ENCODE measurements at regions of chr7 and their contacts with region 1.

Region 1: GRCh38 chr7:151110941-151111645 is 24.8 kb downstream of the AGAP3 start:
- DNase-seq: peak; percentile 83
- H3K4me3 Mint-ChIP-seq: no peak overlapping the region
- H3K27ac Mint-ChIP-seq: no peak overlapping the region
- H3K4me1 Mint-ChIP-seq: no peaks in the 10 kb centered on the region
- H3K27me3 Mint-ChIP-seq: peaks cover 11% of the 10 kb centered on the region

Region 2: GRCh38 chr7:150514748-150515222 is 596.3 kb before region 1 on chr7 and contains the start of gene GIMAP7:
- CTCF ChIA-PET with region 1: no interaction called
- intact Hi-C with region 1: no loop called
- DNase-seq: peak; percentile 70
- H3K4me3 Mint-ChIP-seq: peak within 1 kb of the TSS; percentile 96
- H3K27ac Mint-ChIP-seq: peak within 1 kb of the TSS; percentile 98
- H3K4me1 Mint-ChIP-seq: peaks cover 49% of the 10 kb centered on the region
- H3K27me3 Mint-ChIP-seq: no peaks in the 10 kb centered on the region
- total RNA-seq, gene GIMAP7: 41.6 TPM

Region 3: GRCh38 chr7:150734254-150734653 is 376.8 kb before region 1 on chr7:
- CTCF ChIA-PET with region 1: no interaction called
- intact Hi-C with region 1: no loop called
- DNase-seq: peak; percentile 73
- H3K4me3 Mint-ChIP-seq: no peak overlapping the region
- H3K27ac Mint-ChIP-seq: peak overlapping the region; percentile 95
- H3K4me1 Mint-ChIP-seq: peaks cover 70% of the 10 kb centered on the region
- H3K27me3 Mint-ChIP-seq: no peaks in the 10 kb centered on the region

Region 4: DNA sequence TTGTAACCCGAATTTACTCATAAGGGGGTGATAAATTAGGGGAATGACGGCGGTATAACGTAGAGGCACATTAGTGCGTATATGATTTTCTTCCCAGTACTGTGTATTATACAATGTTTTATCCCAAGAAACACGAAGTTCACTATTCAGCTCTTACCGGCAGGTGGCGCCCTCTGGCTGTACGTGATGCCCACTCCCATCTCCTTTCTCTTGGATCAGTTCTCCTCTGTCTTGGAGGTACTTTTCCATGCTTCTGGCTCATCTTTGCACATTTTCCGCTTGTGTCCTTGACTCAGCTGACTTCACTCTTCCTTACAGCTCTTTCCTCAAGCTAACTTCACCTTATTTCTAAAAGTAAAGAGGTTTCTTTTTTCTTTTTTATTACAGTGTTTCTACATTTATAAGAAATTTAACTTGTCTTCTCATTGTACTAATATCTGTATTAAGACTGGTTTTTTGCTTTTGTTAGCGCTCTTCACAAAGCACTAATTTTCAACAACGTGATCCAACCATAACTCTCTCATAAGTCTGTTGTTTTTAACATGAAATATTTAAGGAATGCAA is 332.3 kb before region 1 on chr7:
- CTCF ChIA-PET with region 1: interaction called, 3 read pairs
- intact Hi-C with region 1: loop called (anchors 5 kb)
- DNase-seq: peak; percentile 87
- H3K4me3 Mint-ChIP-seq: no peak overlapping the region
- H3K27ac Mint-ChIP-seq: no peak overlapping the region
- H3K4me1 Mint-ChIP-seq: peaks cover 4% of the 10 kb centered on the region
- H3K27me3 Mint-ChIP-seq: peaks cover 3% of the 10 kb centered on the region

Region 5: GRCh38 chr7:150962553-150963399 is 148.3 kb before region 1 on chr7:
- CTCF ChIA-PET with region 1: interaction called, 11 read pairs
- intact Hi-C with region 1: loop called (anchors 1 kb)
- DNase-seq: peak; percentile 68
- H3K4me3 Mint-ChIP-seq: no peak overlapping the region
- H3K27ac Mint-ChIP-seq: no peak overlapping the region
- H3K4me1 Mint-ChIP-seq: peaks cover 14% of the 10 kb centered on the region
- H3K27me3 Mint-ChIP-seq: peaks cover 16% of the 10 kb centered on the region

Region 6: GRCh38 chr7:151008511-151009323 is 102.4 kb before region 1 on chr7:
- CTCF ChIA-PET with region 1: interaction called, 7 read pairs
- intact Hi-C with region 1: loop called (anchors 1 kb)
- DNase-seq: peak; percentile 70
- H3K4me3 Mint-ChIP-seq: peak overlapping the region; percentile 70
- H3K27ac Mint-ChIP-seq: peak overlapping the region; percentile 71
- H3K4me1 Mint-ChIP-seq: peaks cover 52% of the 10 kb centered on the region
- H3K27me3 Mint-ChIP-seq: no peaks in the 10 kb centered on the region

Region 7: DNA sequence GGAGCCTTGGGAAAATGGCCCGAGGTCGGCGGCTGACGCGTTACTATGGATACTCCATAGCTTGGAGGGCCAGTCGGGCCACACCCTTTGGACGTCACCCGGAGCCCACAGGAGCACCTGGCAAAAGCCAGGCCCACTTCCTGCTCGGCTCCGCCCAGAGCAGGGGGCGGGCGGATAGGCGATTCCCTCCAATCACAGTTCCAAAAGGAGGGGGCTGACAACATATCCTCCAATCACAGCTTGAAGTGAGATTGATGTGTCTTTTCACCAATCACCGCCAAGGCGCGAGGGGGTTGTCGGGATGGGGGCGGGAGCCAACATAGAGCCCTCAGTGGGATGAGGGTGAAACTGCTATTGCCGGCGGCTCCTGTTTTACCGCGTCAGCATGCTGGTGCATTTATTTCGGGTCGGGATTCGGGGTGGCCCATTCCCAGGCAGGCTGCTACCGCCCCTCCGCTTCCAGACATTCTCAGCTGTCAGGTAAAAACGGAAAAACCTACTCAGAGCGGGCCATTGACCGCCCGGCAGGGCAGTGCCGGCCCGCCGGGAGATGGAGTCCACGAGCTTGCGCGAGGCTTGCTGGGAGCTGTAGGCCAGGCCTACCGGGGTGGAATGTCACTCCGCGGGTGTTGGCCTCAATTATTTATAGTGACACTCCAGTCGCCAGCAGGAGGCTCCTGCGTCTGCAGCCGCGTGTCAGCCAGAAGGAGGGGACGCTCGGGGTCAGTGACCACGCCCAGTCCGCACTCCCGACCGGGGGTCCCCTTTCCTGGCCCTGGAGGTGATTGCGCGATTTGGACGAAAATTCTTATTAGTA is 82.8 kb before region 1 on chr7 and contains the start of gene ABCB8:
- CTCF ChIA-PET with region 1: interaction called, 9 read pairs
- intact Hi-C with region 1: loop called (anchors 1 kb)
- DNase-seq: peak; percentile 100
- H3K4me3 Mint-ChIP-seq: peak within 1 kb of the TSS; percentile 91
- H3K27ac Mint-ChIP-seq: peak within 1 kb of the TSS; percentile 90
- H3K4me1 Mint-ChIP-seq: peaks cover 20% of the 10 kb centered on the region
- H3K27me3 Mint-ChIP-seq: no peaks in the 10 kb centered on the region
- total RNA-seq, gene ABCB8: 41.3 to 47.8 TPM

Region 8: DNA sequence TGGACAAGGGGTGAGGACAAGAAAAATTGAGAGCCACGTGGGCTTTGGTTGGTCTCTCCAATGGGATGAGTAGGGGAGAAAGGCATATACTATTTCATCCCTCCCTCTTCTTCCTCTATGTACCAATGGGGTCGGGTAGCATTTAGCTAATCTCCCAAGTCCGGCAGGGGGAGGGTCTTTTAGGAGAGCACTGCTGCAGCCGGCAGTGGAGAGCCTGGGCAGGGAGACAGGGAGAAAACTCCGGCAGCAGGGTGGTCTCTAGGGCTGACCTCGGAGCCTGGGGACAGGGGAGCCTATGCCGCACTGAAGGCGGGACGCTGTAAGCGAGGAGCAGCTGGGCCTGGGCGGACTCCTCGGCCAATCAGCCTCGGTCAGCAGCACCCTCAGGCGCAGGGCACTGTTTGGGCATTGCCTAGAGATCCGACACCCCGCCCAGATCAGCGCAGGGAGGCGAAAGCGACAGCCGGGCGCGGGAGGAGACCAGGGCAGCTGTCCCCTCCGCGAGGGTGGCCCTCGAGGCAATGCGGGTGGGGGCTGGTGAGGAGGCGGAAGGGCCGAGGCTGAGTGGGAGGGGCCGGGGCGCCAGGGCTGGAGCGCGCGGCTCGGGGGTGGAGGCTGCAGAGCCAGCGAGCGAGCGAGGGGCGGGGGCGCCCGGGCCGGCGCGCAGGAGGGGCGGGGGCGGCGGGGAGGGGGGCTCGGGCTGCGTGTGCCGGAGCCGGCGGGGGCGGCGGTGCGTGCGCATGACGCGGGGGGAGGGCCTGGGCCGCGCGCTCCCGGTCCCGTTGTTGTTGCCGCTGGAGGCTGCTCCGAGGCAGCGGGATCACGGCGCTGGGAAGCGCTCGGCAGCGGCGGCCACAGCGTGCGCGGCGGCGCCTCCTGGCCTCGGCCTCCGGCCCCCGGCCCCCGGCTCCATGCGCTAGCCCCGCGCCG is 25.1 kb before region 1 on chr7 and contains the start of gene AGAP3:
- CTCF ChIA-PET with region 1: interaction called, 49 read pairs
- intact Hi-C with region 1: loop called (anchors 2 kb)
- DNase-seq: peak; percentile 36
- H3K4me3 Mint-ChIP-seq: peak within 1 kb of the TSS; percentile 84
- H3K27ac Mint-ChIP-seq: peak within 1 kb of the TSS; percentile 18
- H3K4me1 Mint-ChIP-seq: peaks cover 32% of the 10 kb centered on the region
- H3K27me3 Mint-ChIP-seq: peaks cover 9% of the 10 kb centered on the region
- total RNA-seq, gene AGAP3: 16.7 to 17.7 TPM

Region 9: GRCh38 chr7:151178236-151178635 is 67.1 kb after region 1 on chr7:
- CTCF ChIA-PET with region 1: no interaction called
- intact Hi-C with region 1: no loop called
- DNase-seq: no peak
- H3K4me3 Mint-ChIP-seq: no peak overlapping the region
- H3K27ac Mint-ChIP-seq: no peak overlapping the region
- H3K4me1 Mint-ChIP-seq: no peaks in the 10 kb centered on the region
- H3K27me3 Mint-ChIP-seq: peaks cover 12% of the 10 kb centered on the region

Measured in activated naive CD4-positive, alpha-beta T cell treated with anti-CD3 and anti-CD28 coated beads for 36 hours (primary cell).